ENCODE measurements at regions of chr9 and their contacts with region 1.

Region 1: GRCh38 chr9:70668751-70669150 is 254.3 kb upstream of the KLF9 start:
- DNase-seq: no peak
- H3K4me3 ChIP-seq: no peak overlapping the region
- H3K27ac ChIP-seq: no peak overlapping the region
- H3K4me1 ChIP-seq: no peaks in the 10 kb centered on the region
- H3K27me3 ChIP-seq: no peaks in the 10 kb centered on the region
- CTCF ChIP-seq: no peak
- EP300 ChIP-seq: no peak
- POLR2A ChIP-seq: no peak

Region 2: DNA sequence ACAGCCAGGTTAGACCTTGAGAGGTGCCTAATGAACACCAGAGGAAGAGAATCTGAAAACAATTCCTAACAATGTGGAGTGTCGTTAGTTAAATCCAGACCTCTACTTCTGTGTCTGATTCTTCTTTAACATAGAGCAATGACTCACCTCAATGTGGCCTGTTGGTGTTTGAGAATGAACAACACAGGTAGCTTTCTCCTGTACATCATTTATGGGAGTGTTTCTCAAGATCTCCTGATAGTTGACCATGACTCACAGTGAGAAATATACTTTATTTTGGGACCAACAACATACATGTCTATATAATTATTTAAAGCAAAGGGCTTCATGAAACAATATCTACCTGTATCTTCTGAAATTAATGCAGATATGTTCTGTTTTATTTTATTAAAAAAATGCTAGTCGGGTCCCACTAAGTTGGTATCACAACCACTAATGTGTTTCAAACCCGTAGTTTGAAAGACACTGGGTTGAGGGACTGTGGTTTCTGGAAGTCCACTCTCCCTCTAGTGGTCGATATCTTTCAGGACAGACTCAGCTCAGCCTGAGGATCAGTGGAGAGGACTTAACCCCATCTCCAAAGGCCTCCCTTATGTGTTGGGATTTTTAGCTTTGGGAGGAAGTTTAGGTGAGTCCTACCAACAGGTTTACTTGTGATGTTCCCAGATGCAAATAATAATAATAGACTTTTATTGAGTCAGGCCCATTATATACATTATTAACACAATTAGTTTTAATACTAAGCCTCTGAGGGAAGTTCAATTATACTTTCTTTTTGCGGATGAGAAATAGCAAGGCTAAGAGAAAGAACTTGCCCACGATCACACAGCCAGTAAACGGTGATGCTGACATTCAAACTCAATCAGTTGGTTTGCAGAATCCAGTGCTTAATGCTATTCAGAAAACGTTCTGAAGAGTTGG is 184.3 kb before region 1 on chr9:
- in situ Hi-C with region 1: no loop called
- intact Hi-C with region 1: no loop called
- DNase-seq: peak; percentile 42
- H3K4me3 ChIP-seq: no peak overlapping the region
- H3K27ac ChIP-seq: peak overlapping the region; percentile 58 to 94 (median 92)
- H3K4me1 ChIP-seq: peaks cover 21 to 70% (median 55%) of the 10 kb centered on the region in 4 donors
- H3K27me3 ChIP-seq: no peaks in the 10 kb centered on the region
- CTCF ChIP-seq: peak; percentile 75 to 93 (median 84)
- EP300 ChIP-seq: no peak
- POLR2A ChIP-seq: no peak

Region 3: GRCh38 chr9:70954126-70954525 is 285.4 kb after region 1 on chr9:
- in situ Hi-C with region 1: loop called in 1 of 4 experiments (anchors 25 kb)
- intact Hi-C with region 1: no loop called
- DNase-seq: no peak
- H3K4me3 ChIP-seq: no peak overlapping the region
- H3K27ac ChIP-seq: no peak overlapping the region
- H3K4me1 ChIP-seq: no peaks in the 10 kb centered on the region
- H3K27me3 ChIP-seq: no peaks in the 10 kb centered on the region
- CTCF ChIP-seq: no peak
- EP300 ChIP-seq: no peak
- POLR2A ChIP-seq: no peak

Region 4: DNA sequence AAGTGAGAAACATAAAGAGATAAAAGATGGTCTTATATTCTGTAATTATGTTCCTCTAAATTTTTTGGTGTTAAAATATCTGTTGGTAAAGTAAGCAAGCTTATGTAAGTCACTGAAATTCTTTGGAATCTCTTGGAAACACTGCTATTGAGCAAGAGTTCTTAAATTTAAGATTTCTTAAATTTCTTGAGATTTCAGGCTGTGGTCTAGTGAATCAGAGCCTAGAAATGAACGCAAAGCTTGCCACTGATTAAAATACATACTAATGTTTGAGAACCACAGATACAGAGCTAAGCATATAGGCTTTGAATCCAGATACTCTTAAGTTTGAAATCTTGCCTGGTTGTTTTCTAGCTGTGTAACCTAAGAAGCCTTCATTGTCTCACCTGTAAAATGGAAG is 319.2 kb after region 1 on chr9:
- in situ Hi-C with region 1: loop called in 1 of 4 experiments (anchors 25 kb)
- intact Hi-C with region 1: no loop called
- DNase-seq: no peak
- H3K4me3 ChIP-seq: no peak overlapping the region
- H3K27ac ChIP-seq: no peak overlapping the region
- H3K4me1 ChIP-seq: no peaks in the 10 kb centered on the region
- H3K27me3 ChIP-seq: no peaks in the 10 kb centered on the region
- CTCF ChIP-seq: no peak
- EP300 ChIP-seq: no peak
- POLR2A ChIP-seq: no peak

Region 5: DNA sequence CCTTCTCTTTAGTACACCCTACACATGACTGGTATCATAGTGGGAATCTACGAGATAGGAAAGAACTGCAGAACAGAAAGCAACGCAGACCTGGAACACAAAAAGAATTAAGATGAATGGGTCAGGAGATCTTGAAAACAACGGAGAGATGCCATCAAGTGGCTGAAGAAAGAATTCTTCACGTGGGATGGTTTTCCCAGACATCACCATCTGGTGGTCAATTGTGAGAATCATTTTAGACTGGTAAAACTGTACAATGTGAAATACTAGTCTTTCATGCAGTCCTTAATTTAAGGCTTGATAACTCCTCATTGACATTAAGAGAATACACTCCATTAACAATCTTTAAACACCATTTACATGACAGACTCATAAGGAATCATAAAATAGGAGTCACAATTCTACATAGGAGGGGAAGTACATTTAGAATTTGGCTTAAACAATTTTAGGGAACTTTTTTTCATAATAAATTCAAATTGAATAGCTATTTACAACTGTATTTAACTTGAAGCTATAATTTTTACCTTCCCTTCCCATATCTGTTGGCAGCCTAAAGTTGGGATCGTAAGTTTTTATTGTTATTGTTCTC is 581.1 kb after region 1 on chr9:
- in situ Hi-C with region 1: loop called in 3 of 4 experiments (anchors 25 kb)
- intact Hi-C with region 1: no loop called
- DNase-seq: no peak
- H3K4me3 ChIP-seq: no peak overlapping the region
- H3K27ac ChIP-seq: no peak overlapping the region
- H3K4me1 ChIP-seq: no peaks in the 10 kb centered on the region
- H3K27me3 ChIP-seq: no peaks in the 10 kb centered on the region
- CTCF ChIP-seq: peak; percentile 51 to 75 (median 63)
- EP300 ChIP-seq: no peak
- POLR2A ChIP-seq: no peak

Measured in transverse colon (tissue), 4 donors.